SK-N-SH (cell line): ENCODE measurements at regions of chr11 and their contacts with region 1.

Region 1: DNA sequence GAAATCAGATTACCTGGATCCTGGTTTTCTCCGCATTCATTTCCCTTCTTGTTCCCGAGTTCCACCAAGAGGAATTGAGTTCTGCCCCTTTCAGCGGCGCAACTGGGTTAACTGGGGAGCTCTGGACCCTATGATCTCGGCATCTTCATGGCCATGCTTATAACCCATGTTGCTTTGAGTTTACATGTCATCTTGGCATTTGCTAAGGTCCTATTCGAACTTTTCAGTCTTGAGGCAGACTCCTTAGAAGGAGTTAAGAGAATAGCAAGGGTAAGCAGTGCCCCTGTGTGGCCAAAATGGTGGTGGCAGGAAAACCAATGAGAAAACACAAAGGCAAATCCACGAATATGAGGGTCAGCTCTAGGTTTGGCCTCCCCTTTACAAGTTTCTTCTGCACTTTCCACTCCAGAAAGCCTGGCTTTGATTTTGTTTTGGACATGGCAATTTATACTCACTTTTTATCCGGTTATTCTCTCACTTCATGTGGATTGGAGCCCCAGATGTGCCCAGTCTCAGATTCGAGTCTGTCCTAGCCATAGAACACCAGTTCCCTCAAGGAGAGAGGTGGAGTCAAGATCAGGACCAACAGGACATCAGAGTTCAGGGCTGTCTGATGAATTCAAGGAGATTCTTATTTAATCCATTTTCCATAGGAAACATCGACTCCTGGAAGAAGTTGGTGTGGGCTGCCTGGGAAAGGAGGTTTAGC is 55.3 kb upstream of the FBXO3 start:
- DNase-seq: peak; percentile 78
- H3K4me3 ChIP-seq: peak overlapping the region; percentile 49 to 62
- H3K27ac ChIP-seq: no peak overlapping the region
- H3K4me1 ChIP-seq: peaks cover 0 to 7% of the 10 kb centered on the region in 2 experiments; a peak in 1 of 4 replicates
- H3K27me3 ChIP-seq: peaks cover 19% of the 10 kb centered on the region; the same call in 1 of the 2 replicates
- CTCF ChIP-seq: peak; percentile 93
- EP300 ChIP-seq: no peak
- RAD21 ChIP-seq: peak; percentile 88

Region 2: DNA sequence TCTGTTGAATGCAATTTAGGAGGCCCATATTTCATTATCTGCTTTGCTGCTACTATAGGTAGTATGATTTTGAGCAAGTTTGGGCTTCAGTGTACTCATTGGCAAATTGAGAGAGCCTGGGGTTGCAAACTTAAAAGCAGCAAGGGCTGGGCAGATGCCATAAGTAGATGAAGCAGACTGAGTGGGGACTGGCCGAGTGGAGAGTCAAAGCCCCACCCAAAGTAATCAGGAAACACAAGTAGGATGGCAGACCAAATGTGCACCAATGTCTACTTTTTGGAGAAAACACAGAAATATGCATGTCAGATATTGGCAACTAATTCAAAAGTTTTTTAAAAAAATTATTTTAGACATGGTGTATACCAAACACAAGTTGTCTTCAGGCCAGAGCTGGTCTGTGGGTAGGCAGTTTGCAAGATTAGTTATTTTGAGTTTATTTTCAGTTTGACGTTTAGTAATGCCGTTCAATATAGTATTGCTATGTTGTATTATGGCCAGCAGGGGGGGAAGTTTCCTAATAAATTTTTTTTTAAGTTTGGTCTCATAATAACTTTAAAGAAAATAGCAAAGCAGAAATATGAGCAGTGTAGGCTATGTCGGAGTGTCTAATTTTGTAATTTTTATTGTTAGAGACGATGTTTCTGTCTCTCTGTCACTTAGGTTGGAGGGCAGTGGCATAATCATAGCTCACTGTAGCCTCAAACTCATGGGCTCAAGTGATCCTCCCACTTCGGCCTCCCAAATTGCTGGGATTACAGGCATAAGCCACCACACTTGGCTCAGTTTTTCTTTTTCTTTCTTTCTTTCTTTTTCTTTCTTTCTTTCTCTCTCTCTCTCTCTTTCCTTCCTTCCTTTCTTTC is 467.3 kb before region 1 on chr11:
- CTCF ChIA-PET with region 1: interaction called, 11 read pairs
- POLR2A ChIA-PET with region 1: no interaction called
- DNase-seq: no peak
- H3K4me3 ChIP-seq: no peak overlapping the region; a peak in 1 of 4 replicates
- H3K27ac ChIP-seq: 0 out of 4 replicates have a peak overlapping the region, but pooled peaks of 1 of the 2 experiments have one; percentile 25
- H3K4me1 ChIP-seq: no peaks in the 10 kb centered on the region; a peak in 2 of 4 replicates
- H3K27me3 ChIP-seq: no peaks in the 10 kb centered on the region
- CTCF ChIP-seq: peak; percentile 75
- EP300 ChIP-seq: no peak
- RAD21 ChIP-seq: peak; percentile 79

Region 3: DNA sequence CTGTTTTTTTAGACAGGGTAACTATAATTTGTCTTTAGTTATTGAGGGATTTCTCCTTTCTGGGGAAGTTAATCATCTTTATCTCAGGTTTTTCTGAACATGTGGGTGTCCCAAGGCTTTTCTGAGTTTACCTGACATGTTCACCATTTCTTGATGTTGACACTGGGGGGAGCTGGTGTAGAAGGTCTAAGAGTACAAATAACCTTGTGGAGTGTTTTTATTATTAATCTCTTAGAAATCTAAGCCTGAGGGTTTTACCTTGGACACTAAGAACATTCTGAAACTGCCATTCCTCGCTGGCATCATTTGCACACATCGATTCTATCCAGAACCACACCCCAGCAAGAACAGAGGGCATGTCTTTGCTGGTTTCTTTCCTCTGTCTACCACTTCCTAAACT is 113.4 kb before region 1 on chr11:
- CTCF ChIA-PET with region 1: interaction called, 13 read pairs
- POLR2A ChIA-PET with region 1: no interaction called
- DNase-seq: peak; percentile 23
- H3K4me3 ChIP-seq: no peak overlapping the region
- H3K27ac ChIP-seq: peak overlapping the region in 1 of 2 experiments; percentile 21; a peak in 1 of 4 replicates
- H3K4me1 ChIP-seq: peaks cover 4 to 20% of the 10 kb centered on the region in 2 experiments; a peak in 3 of 4 replicates
- H3K27me3 ChIP-seq: no peaks in the 10 kb centered on the region
- CTCF ChIP-seq: peak; percentile 56
- EP300 ChIP-seq: no peak
- RAD21 ChIP-seq: peak; percentile 61

Region 4: GRCh38 chr11:33785609-33786008 is 44.0 kb before region 1 on chr11:
- CTCF ChIA-PET with region 1: interaction called, 10 read pairs
- POLR2A ChIA-PET with region 1: no interaction called
- DNase-seq: no peak
- H3K4me3 ChIP-seq: no peak overlapping the region
- H3K27ac ChIP-seq: no peak overlapping the region
- H3K4me1 ChIP-seq: peaks cover 0 to 6% of the 10 kb centered on the region in 2 experiments; a peak in 1 of 4 replicates
- H3K27me3 ChIP-seq: no peaks in the 10 kb centered on the region; the same call in 1 of the 2 replicates
- CTCF ChIP-seq: no peak
- EP300 ChIP-seq: no peak
- RAD21 ChIP-seq: no peak

Region 5: GRCh38 chr11:33808228-33808828 is 21.3 kb before region 1 on chr11:
- CTCF ChIA-PET with region 1: interaction called, 213 read pairs
- POLR2A ChIA-PET with region 1: no interaction called
- DNase-seq: peak; percentile 71
- H3K4me3 ChIP-seq: peak overlapping the region in 1 of 2 experiments; percentile 25; a peak in 1 of 4 replicates
- H3K27ac ChIP-seq: no peak overlapping the region
- H3K4me1 ChIP-seq: no peaks in the 10 kb centered on the region; a peak in 2 of 4 replicates
- H3K27me3 ChIP-seq: peaks cover 6% of the 10 kb centered on the region; the same call in 1 of the 2 replicates
- CTCF ChIP-seq: peak; percentile 88
- EP300 ChIP-seq: no peak
- RAD21 ChIP-seq: peak; percentile 83

Region 6: DNA sequence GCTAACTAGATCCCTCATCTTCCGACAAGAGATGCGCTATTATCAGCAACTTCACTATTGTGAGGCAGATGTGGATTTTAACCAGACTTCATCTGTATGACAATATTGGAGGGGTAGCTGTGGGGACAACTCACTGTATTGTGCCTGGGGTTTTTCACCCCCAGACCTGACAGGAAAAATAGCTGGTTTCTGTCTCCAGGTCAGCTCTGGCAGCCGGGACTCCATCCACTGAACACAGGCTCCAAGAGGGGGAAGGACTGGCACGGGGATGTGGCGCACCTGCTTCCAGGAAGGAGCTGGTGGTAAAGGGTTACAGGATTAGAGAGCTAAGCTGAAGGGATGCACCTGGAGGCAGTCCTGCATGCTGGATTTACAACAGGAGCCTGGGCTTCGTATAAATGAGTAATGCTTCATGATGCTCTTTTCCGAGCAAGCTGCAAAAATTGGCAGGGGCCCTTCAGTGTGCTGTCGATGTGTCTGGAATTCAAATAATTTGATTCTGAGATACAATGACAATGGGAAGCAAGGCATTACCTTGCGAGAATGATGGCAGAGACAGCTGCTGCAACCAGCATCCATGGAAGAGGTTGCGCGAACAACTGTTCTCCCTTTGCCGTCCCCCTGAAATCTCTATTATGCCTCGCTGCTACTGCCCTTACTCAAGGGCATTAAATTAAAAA is 12.8 kb after region 1 on chr11:
- CTCF ChIA-PET with region 1: interaction called, 24 read pairs
- POLR2A ChIA-PET with region 1: no interaction called
- DNase-seq: peak; percentile 53
- H3K4me3 ChIP-seq: peak overlapping the region in 1 of 2 experiments; percentile 35; a peak in 2 of 4 replicates
- H3K27ac ChIP-seq: peak overlapping the region in 1 of 2 experiments; percentile 47; a peak in 2 of 4 replicates
- H3K4me1 ChIP-seq: peaks cover 7 to 9% of the 10 kb centered on the region in 2 experiments; a peak in 3 of 4 replicates
- H3K27me3 ChIP-seq: peaks cover 39% of the 10 kb centered on the region
- CTCF ChIP-seq: no peak
- EP300 ChIP-seq: no peak
- RAD21 ChIP-seq: no peak

Region 7: DNA sequence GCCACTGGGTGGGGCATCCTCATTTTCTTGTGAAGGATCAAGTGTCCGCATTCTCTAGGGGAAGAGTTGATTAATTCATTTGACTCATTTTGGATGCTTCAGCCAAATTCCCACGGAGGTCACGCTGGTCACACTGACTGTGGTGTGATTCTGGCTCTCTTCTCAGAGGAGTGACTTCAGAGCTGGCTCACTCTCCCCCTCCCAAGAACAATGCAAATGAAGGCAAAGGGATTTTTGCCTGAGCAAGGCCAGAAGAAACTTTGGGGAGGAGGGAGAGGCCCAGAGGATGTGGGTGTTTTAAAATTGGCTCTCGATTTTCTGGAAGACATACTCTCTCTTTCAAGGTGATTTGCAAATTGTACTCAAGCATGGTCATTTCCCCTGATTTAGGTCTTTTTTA is 113.4 kb after region 1 on chr11:
- CTCF ChIA-PET with region 1: no interaction called
- POLR2A ChIA-PET with region 1: no interaction called
- DNase-seq: no peak
- H3K4me3 ChIP-seq: no peak overlapping the region
- H3K27ac ChIP-seq: no peak overlapping the region
- H3K4me1 ChIP-seq: peaks cover 7 to 8% of the 10 kb centered on the region in 2 experiments; a peak in 2 of 4 replicates
- H3K27me3 ChIP-seq: no peaks in the 10 kb centered on the region
- CTCF ChIP-seq: no peak; the same call in 1 of the 2 replicates
- EP300 ChIP-seq: no peak
- RAD21 ChIP-seq: no peak

Region 8: GRCh38 chr11:33976495-33977199 is 147.1 kb after region 1 on chr11:
- CTCF ChIA-PET with region 1: interaction called, 40 read pairs
- POLR2A ChIA-PET with region 1: no interaction called
- DNase-seq: no peak
- H3K4me3 ChIP-seq: no peak overlapping the region
- H3K27ac ChIP-seq: no peak overlapping the region
- H3K4me1 ChIP-seq: peaks cover 0 to 11% of the 10 kb centered on the region in 2 experiments; a peak in 1 of 4 replicates
- H3K27me3 ChIP-seq: peaks cover 8% of the 10 kb centered on the region; the same call in 1 of the 2 replicates
- CTCF ChIP-seq: no peak
- EP300 ChIP-seq: no peak
- RAD21 ChIP-seq: no peak

Region 9: DNA sequence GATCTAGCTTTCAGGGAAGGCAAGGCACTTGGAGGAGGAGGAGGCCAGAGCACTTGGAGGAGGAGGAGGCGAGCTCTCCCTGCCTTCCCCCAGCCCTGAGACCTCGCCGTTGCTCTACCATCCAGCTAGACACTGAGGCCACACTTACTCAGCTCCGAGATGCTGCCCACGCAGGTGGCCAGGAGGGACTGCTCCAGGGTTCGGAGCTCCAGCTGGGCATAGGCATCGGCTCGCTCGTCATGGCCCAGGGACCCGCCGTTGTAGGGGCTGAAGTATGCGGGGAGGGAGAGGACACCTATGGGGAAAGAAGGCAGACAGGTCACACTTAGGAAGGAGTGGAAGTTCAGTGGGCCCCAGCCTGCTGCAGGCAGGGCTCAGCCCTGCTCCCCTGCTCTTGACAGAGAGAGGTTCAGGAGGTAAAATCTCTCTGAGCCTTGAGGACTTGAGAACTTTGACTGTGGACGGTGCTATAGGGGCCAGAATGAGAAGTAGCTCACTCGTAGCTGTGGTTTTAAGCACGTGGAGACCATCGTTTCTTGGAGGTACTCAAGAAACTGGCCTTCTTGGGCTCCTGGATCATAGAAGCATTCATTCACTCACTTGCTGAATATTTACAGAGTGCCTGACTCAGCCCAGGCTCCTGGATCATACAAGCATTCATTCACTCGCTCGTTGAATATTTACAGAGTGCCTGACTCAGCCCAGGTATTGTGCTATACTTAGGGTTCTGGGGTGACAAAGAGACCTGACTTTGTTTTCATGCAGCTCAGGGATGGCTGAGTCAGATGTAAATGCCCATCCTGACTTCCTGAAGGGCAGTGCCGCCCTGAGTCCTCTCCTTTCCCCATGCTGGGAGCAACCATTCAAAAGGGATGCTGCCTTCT is 375.1 kb after region 1 on chr11:
- CTCF ChIA-PET with region 1: no interaction called
- POLR2A ChIA-PET with region 1: no interaction called
- DNase-seq: no peak
- H3K4me3 ChIP-seq: no peak overlapping the region
- H3K27ac ChIP-seq: peak overlapping the region in 1 of 2 experiments; percentile 36; a peak in 1 of 4 replicates
- H3K4me1 ChIP-seq: peaks cover 7 to 42% of the 10 kb centered on the region in 2 experiments; a peak in 2 of 4 replicates
- H3K27me3 ChIP-seq: no peaks in the 10 kb centered on the region
- CTCF ChIP-seq: no peak
- EP300 ChIP-seq: no peak
- RAD21 ChIP-seq: no peak